HepG2 (cell line): ENCODE measurements at regions of chr1 and their contacts with region 1.

Region 1: GRCh38 chr1:205631727-205632373 is at the start of gene ELK4:
- DNase-seq: peak; percentile 95
- ATAC-seq: peak; percentile 78
- H3K4me3 ChIP-seq: peak within 1 kb of the TSS; percentile 64 to 96 (median 95)
- H3K27ac ChIP-seq: peak within 1 kb of the TSS; percentile 96
- H3K4me1 ChIP-seq: peaks cover 54% of the 10 kb centered on the region
- H3K27me3 ChIP-seq: no peaks in the 10 kb centered on the region; a peak in 1 of 5 replicates
- CTCF ChIP-seq: peak; percentile 92
- EP300 ChIP-seq: no peak
- POLR2A ChIP-seq: peak; percentile 90 to 98
- RAD21 ChIP-seq: peak; percentile 96
- total RNA-seq, gene ELK4: 13.1 and 15.0 TPM in 2 replicates

Region 2: DNA sequence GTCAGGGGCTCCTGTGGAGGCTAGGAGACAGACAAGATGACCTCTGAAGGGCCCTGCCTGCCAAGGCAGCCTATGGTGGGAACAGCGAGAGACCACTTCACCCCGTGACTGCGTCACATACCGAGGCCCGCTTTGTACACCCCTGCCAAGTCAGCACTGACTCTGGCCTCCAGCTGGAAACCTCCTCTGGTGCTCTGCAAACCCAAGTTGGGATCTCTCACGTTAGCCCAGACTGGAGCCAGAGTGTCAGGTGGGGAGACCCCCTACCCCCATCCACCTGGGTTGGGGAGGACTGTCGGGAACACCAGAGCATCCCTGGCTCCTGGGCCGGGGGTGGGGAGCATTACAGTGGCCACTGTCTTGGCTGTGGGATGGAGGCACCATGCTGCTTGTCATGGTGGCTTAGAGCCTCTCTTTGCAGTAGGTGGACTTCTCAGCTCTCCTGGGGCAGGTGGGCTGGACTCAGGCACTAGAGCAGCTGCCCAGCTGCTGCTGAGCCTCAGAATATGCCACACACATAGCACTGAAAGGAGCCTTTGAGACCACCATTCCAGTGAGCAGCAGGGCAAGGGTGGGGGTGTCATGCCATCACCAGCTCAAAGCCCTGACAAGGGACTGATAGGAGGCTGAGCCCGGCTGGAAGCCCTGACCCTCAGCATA is 50.4 kb before region 1 on chr1:
- CTCF ChIA-PET with region 1: no interaction called
- POLR2A ChIA-PET with region 1: no interaction called
- in situ Hi-C with region 1: no loop called
- intact Hi-C with region 1: no loop called
- DNase-seq: no peak
- ATAC-seq: no peak
- H3K4me3 ChIP-seq: no peak overlapping the region; a peak in 1 of 6 replicates
- H3K27ac ChIP-seq: no peak overlapping the region
- H3K4me1 ChIP-seq: peaks cover 40% of the 10 kb centered on the region
- H3K27me3 ChIP-seq: peaks cover 13 to 59% of the 10 kb centered on the region in 2 experiments
- CTCF ChIP-seq: no peak
- EP300 ChIP-seq: no peak
- POLR2A ChIP-seq: no peak
- RAD21 ChIP-seq: no peak

Region 3: GRCh38 chr1:205591522-205592351 is 40.1 kb before region 1 on chr1:
- CTCF ChIA-PET with region 1: interaction called, 16 read pairs
- POLR2A ChIA-PET with region 1: interaction called, 63 read pairs
- in situ Hi-C with region 1: loop called (anchors 5 kb)
- intact Hi-C with region 1: loop called (anchors 1 kb)
- DNase-seq: peak; percentile 73
- ATAC-seq: peak; percentile 86
- H3K4me3 ChIP-seq: peak overlapping the region; percentile 59 to 85 (median 68); a peak in 5 of 6 replicates
- H3K27ac ChIP-seq: peak overlapping the region; percentile 57
- H3K4me1 ChIP-seq: peaks cover 36% of the 10 kb centered on the region
- H3K27me3 ChIP-seq: 0 out of 5 replicates have a peak, but pooled peaks cover 0 to 7% of the 10 kb centered on the region in 2 experiments
- CTCF ChIP-seq: peak; percentile 100
- EP300 ChIP-seq: no peak
- POLR2A ChIP-seq: peak in 1 of 2 experiments; percentile 39; a peak in 1 of 4 replicates
- RAD21 ChIP-seq: peak; percentile 99

Region 4: DNA sequence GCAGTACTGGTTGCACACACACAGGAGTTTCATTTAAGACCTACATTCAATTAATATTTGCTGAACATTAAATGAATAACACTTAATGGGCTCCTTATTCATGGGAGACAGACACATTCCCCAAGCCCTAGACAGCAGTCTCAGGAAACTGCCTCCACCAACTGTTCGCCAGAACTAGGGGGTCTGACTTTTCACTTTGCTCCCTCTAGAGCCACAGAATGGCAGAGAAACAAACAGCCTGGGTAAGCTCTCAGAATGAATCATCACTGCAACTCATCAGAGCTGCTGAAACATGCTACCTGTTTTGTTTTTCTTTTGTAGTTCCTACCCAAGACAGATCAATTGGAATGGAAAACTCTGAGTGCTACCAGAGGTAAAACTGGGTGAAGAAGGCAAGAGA is 31.8 kb before region 1 on chr1:
- CTCF ChIA-PET with region 1: no interaction called
- POLR2A ChIA-PET with region 1: interaction called, 14 read pairs
- in situ Hi-C with region 1: no loop called
- intact Hi-C with region 1: no loop called
- DNase-seq: no peak
- ATAC-seq: no peak
- H3K4me3 ChIP-seq: no peak overlapping the region
- H3K27ac ChIP-seq: no peak overlapping the region
- H3K4me1 ChIP-seq: peaks cover 25% of the 10 kb centered on the region
- H3K27me3 ChIP-seq: no peaks in the 10 kb centered on the region
- CTCF ChIP-seq: no peak
- EP300 ChIP-seq: no peak
- POLR2A ChIP-seq: no peak
- RAD21 ChIP-seq: no peak

Region 5: DNA sequence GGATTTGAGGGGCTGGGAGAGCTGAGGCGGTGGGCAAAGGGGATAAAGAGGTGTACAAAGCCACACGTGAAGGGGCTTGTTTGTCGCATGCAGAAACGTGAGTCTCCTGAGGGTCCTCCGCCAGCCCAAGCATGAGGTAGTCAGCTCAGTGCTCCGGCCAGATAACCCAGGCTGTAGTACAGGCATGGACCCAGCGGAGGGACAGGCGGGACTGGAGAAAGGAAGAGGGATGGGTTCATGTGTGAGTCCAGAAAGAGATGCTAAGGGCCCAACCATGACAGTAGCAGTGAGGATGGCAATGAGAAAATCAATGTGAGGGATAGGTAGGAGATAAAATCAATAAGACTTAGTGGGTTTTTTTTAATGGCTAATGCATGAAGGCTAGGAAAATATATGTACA is 13.7 kb after region 1 on chr1:
- CTCF ChIA-PET with region 1: no interaction called
- POLR2A ChIA-PET with region 1: interaction called, 34 read pairs
- in situ Hi-C with region 1: no loop called
- intact Hi-C with region 1: no loop called
- DNase-seq: no peak
- ATAC-seq: peak; percentile 45; the same call in 2 of the 3 replicates
- H3K4me3 ChIP-seq: no peak overlapping the region
- H3K27ac ChIP-seq: no peak overlapping the region
- H3K4me1 ChIP-seq: peaks cover 56% of the 10 kb centered on the region
- H3K27me3 ChIP-seq: no peaks in the 10 kb centered on the region
- CTCF ChIP-seq: no peak
- EP300 ChIP-seq: no peak
- POLR2A ChIP-seq: no peak
- RAD21 ChIP-seq: no peak

Region 6: GRCh38 chr1:205668951-205669340 is 37.1 kb after region 1 on chr1:
- CTCF ChIA-PET with region 1: no interaction called
- POLR2A ChIA-PET with region 1: no interaction called
- in situ Hi-C with region 1: no loop called
- intact Hi-C with region 1: no loop called
- DNase-seq: peak; percentile 25
- ATAC-seq: peak; percentile 62
- H3K4me3 ChIP-seq: no peak overlapping the region
- H3K27ac ChIP-seq: no peak overlapping the region
- H3K4me1 ChIP-seq: peaks cover 99% of the 10 kb centered on the region
- H3K27me3 ChIP-seq: no peaks in the 10 kb centered on the region
- CTCF ChIP-seq: peak; percentile 66
- EP300 ChIP-seq: no peak
- POLR2A ChIP-seq: no peak
- RAD21 ChIP-seq: peak; percentile 43; the same call in 1 of the 2 replicates